CD4-positive, alpha-beta T cell (primary cell): ENCODE measurements at regions of chr12 and their contacts with region 1.

Region 1: DNA sequence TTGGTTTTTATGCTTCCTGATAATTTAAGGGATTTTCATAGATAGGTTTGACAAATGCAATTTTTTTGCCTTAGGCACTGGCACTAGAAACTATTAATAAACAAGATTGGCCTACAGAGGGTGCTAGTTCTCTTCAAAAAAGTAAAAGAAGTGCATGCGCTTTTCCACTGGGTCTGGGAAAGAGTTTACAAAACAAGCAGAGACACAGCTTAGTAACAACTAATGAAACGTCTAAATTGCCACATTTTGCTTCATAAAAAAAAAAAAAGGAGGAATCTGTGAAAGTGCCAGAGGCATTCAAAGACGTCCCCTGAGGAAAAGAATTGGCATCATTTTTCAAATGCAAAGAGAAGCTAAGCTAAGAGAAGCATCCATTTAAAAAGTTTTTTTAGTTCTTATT is 58.3 kb upstream of the EEA1 start:
- DNase-seq: peak in 4 of 14 experiments; percentile 13 to 73 (median 70)
- ATAC-seq: peak; percentile 81
- H3K4me3 ChIP-seq: no peak overlapping the region
- H3K4me3 Mint-ChIP-seq: peak overlapping the region; percentile 26
- H3K27ac ChIP-seq: no peak overlapping the region
- H3K27ac Mint-ChIP-seq: no peak overlapping the region
- H3K4me1 ChIP-seq: peaks cover 7% of the 10 kb centered on the region
- H3K4me1 Mint-ChIP-seq: peaks cover 12% of the 10 kb centered on the region
- H3K27me3 ChIP-seq: no peaks in the 10 kb centered on the region
- H3K27me3 Mint-ChIP-seq: no peaks in the 10 kb centered on the region
- CTCF ChIP-seq: peak; percentile 80

Region 2: DNA sequence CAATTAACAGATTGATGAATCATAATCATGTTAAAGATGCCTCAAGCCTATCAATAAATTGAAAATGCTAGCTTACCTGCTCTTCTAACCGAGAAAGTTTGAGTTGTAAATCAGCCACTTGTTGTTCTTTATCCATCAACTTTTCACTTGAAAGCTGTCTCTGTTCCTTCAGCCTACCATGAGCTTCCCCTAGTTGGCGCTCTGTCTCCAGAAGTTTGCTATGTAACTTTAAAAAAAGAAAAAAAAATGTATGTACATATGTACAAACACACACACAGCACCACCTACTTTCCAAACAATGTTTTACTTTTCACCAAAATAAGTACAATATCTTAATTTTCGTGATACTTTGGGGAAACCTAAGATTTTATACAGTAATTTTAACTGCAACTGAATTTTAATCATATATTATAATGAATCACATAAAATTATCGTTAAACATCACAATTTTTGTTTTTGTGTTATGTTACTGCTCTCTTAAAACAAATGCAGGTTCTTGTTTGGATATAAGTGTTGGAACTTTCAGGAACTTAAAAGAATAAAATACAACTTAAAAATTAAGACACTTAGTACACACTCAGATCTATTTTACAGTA is 159.4 kb before region 1 on chr12:
- CTCF ChIA-PET with region 1: no interaction called
- POLR2A ChIA-PET with region 1: no interaction called
- intact Hi-C with region 1: loop called in 1 of 2 experiments (anchors 5 kb)
- DNase-seq: peak in 12 of 14 experiments; percentile 10 to 67 (median 32)
- ATAC-seq: peak; percentile 79
- H3K4me3 ChIP-seq: no peak overlapping the region
- H3K4me3 Mint-ChIP-seq: no peak overlapping the region
- H3K27ac ChIP-seq: no peak overlapping the region
- H3K27ac Mint-ChIP-seq: no peak overlapping the region
- H3K4me1 ChIP-seq: no peaks in the 10 kb centered on the region
- H3K4me1 Mint-ChIP-seq: peaks cover 11% of the 10 kb centered on the region
- H3K27me3 ChIP-seq: no peaks in the 10 kb centered on the region
- H3K27me3 Mint-ChIP-seq: no peaks in the 10 kb centered on the region
- CTCF ChIP-seq: peak; percentile 65

Region 3: DNA sequence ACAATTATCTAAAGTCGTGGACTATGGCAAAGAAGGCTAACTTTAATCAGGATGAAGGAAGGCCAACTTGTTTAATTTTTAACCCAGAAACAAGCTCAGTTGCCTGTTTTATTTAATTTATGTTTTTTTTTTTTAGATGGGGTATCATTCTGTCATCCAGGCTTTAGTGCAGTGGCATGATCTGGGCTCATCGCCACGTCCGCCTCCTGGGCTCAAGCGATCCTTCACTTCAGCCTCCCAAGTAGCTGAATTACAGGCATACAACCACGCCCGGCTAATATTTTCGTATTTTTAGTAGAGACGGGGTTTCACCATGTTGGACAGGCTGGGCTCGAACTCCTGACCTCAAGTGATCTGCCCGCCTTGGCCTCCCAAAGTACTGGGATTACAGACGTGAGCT is 410.1 kb after region 1 on chr12:
- CTCF ChIA-PET with region 1: interaction called, 6 read pairs
- POLR2A ChIA-PET with region 1: interaction called, 5 read pairs
- intact Hi-C with region 1: loop called (anchors 2 kb)
- DNase-seq: no peak
- ATAC-seq: no peak
- H3K4me3 ChIP-seq: no peak overlapping the region
- H3K4me3 Mint-ChIP-seq: no peak overlapping the region
- H3K27ac ChIP-seq: no peak overlapping the region
- H3K27ac Mint-ChIP-seq: no peak overlapping the region
- H3K4me1 ChIP-seq: no peaks in the 10 kb centered on the region
- H3K4me1 Mint-ChIP-seq: peaks cover 1% of the 10 kb centered on the region
- H3K27me3 ChIP-seq: no peaks in the 10 kb centered on the region
- H3K27me3 Mint-ChIP-seq: no peaks in the 10 kb centered on the region
- CTCF ChIP-seq: no peak